ENCODE measurements at regions of chr5 and their contacts with region 1.

Region 1: GRCh38 chr5:2910401-2911175 is 159.1 kb upstream of the IRX2 start:
- DNase-seq: no peak
- ATAC-seq: no peak
- H3K4me3 ChIP-seq: no peak overlapping the region
- H3K27ac ChIP-seq: no peak overlapping the region
- H3K4me1 ChIP-seq: no peaks in the 10 kb centered on the region
- H3K27me3 ChIP-seq: no peaks in the 10 kb centered on the region
- CTCF ChIP-seq: no peak
- POLR2A ChIP-seq: no peak

Region 2: GRCh38 chr5:2805080-2805479 is 105.5 kb before region 1 on chr5:
- in situ Hi-C with region 1: no loop called
- intact Hi-C with region 1: no loop called
- DNase-seq: no peak
- ATAC-seq: no peak
- H3K4me3 ChIP-seq: no peak overlapping the region
- H3K27ac ChIP-seq: no peak overlapping the region
- H3K4me1 ChIP-seq: no peaks in the 10 kb centered on the region
- H3K27me3 ChIP-seq: no peaks in the 10 kb centered on the region
- CTCF ChIP-seq: no peak
- POLR2A ChIP-seq: no peak

Region 3: DNA sequence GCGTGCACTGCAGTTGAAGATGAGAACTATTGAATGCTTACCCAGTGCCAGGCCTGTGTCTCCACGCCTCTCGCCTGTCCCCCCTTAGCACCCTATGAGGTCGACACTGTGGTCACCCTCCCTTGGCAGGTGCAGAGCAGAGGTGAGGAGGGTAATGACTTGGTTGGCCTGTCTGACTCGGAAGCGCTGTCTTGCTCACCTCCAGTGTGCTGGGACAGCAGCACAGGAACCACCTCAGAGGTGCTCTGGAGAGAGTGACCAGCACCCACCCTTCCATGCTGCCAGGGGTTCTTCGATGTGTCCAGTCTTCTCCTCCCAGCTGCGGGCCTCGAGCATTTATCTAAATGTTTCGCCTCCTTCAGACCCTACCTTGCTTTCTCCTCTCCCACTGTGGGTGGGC is 19.2 kb after region 1 on chr5:
- in situ Hi-C with region 1: no loop called
- intact Hi-C with region 1: loop called (anchors 1 kb)
- DNase-seq: no peak
- ATAC-seq: no peak
- H3K4me3 ChIP-seq: no peak overlapping the region
- H3K27ac ChIP-seq: no peak overlapping the region
- H3K4me1 ChIP-seq: no peaks in the 10 kb centered on the region
- H3K27me3 ChIP-seq: no peaks in the 10 kb centered on the region
- CTCF ChIP-seq: no peak
- POLR2A ChIP-seq: no peak